ENCODE measurements at regions of chr6 and their contacts with region 1.

Region 1: GRCh38 chr6:31952140-31952805 is 6.4 kb downstream of the CFB start:
- DNase-seq: peak; percentile 44
- H3K4me3 ChIP-seq: no peak overlapping the region
- H3K27ac ChIP-seq: no peak overlapping the region
- H3K4me1 ChIP-seq: no peaks in the 10 kb centered on the region
- CTCF ChIP-seq: peak; percentile 84

Region 2: DNA sequence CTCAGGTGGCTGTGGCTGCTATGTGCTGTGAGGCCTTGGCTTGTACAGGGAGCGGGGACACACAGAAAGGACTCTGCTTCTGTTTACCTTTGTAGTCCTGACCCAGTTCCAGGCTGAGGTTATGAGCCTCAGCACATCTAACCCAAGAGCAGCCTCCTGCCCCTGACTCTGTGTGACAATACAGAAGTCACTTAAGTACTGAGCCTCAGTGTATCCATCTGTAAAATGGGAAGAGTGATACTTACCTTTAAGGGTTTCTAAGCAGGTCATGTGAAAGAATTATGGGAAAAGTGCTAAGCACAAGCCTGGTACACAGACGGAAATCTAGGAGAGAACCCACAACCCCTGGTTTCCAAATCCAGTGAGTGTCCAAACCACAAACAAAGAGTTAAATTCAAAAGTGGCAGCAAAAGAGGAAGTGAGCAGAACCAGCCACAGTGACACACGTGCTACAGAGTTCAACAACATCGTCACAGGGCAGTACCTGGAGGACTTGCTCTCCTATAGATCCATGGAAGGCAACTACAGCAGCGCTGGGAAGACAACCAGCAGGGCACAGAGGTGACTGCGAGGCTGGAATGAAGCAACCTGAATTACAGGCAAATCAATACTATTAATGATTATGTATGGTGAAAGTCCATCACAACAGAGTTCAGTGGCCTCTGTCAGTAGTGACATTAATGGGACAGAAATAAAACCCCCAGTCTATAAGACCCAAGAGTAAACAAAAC is 1751.6 kb before region 1 on chr6:
- CTCF ChIA-PET with region 1: no interaction called
- POLR2A ChIA-PET with region 1: no interaction called
- intact Hi-C with region 1: no loop called
- DNase-seq: peak; percentile 78
- H3K4me3 ChIP-seq: peak overlapping the region; percentile 27
- H3K27ac ChIP-seq: peak overlapping the region; percentile 35
- H3K4me1 ChIP-seq: peaks cover 25% of the 10 kb centered on the region
- CTCF ChIP-seq: no peak

Region 3: DNA sequence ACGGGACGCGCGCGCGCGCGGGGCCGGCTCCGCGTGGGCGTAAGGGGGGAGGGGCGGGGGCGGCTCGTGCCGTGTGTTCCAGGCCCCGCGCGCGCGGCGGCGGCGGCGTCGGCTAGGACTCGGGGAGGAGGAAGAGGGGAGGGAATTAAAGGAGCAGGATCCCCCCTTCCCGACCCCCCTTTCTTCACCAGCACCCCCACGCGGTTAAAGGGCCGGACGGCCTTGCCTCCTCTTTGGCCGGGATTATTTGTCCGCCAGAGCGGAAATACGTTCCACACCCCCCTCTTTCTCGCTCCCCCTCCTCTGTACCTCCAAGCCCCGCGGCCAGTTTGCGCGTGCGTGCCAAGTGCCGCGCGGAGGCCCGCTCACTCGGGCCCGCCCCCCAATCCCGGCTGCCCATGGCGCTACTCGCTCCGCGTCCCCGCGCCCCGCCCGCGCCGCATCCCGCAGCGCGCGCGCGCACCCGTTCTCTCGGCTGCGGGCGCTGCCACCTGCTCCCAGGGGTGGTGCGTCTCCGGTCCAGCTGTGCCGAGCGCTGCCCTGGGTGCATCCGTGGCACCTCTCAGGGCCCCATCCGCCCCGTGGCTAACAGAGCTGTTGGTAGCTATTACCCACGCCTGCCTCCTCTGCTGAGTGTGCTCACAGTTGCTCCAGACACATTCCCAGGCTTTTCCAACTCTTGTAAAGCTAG is 50.2 kb before region 1 on chr6 and contains the start of gene ZBTB12:
- CTCF ChIA-PET with region 1: no interaction called
- POLR2A ChIA-PET with region 1: no interaction called
- intact Hi-C with region 1: loop called (anchors 1 kb)
- DNase-seq: peak; percentile 95
- H3K4me3 ChIP-seq: peak within 1 kb of the TSS; percentile 75
- H3K27ac ChIP-seq: peak within 1 kb of the TSS; percentile 11
- H3K4me1 ChIP-seq: peaks cover 30% of the 10 kb centered on the region
- CTCF ChIP-seq: no peak
- total RNA-seq, gene ZBTB12: 12.8 and 17.6 TPM in 2 replicates